PC-9 (cell line): ENCODE measurements at regions of chr10 and their contacts with region 1.

Region 1: GRCh38 chr10:92432596-92432995 is 141.3 kb downstream of the IDE start:
- DNase-seq: no peak
- H3K4me3 ChIP-seq: no peak overlapping the region
- H3K27ac ChIP-seq: no peak overlapping the region
- H3K4me1 ChIP-seq: no peaks in the 10 kb centered on the region
- H3K27me3 ChIP-seq: no peaks in the 10 kb centered on the region
- CTCF ChIP-seq: no peak

Region 2: DNA sequence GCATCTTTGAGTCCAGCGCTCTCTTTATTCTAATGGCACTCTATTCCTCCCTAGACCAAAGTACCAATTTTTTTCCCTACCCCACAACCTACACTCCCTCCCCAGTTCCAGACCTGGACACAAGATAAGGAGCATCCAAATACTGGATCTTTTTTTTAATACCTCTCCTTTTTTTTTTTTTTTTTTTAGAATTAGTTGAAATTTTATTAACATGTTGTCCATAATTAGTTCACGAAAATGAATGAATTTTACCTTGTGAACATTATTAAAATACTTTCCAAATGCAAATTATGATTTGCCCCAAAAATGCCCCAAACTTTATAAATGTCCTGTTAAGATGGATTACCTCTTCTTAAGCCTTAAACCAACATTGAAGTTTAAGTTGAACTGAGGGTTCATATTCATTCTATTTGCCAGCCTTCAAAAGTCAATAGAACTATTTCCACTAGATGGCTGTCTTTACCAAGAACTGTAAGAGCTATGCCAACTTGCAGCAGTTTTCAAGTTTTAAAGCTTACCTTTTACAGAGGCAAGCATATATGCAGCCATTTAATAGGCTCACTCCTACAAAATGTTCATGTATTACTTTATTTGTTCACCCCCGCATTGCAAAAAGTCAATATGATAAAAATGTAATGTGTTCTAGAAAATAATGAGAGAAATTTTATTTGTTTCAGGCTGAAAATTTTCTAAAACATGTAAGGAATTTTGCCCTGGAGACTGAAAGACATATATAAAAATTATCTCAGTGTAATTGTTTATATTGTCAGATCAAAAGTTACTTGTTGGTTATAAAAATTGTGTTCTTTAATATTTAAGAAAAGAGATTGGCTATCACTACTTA is 674.1 kb before region 1 on chr10:
- CTCF ChIA-PET with region 1: no interaction called
- POLR2A ChIA-PET with region 1: no interaction called
- intact Hi-C with region 1: loop called (anchors 2 kb)
- DNase-seq: peak in 1 of 2 experiments; percentile 60
- H3K4me3 ChIP-seq: no peak overlapping the region
- H3K27ac ChIP-seq: no peak overlapping the region
- H3K4me1 ChIP-seq: peaks cover 9% of the 10 kb centered on the region
- H3K27me3 ChIP-seq: no peaks in the 10 kb centered on the region
- CTCF ChIP-seq: peak; percentile 71

Region 3: DNA sequence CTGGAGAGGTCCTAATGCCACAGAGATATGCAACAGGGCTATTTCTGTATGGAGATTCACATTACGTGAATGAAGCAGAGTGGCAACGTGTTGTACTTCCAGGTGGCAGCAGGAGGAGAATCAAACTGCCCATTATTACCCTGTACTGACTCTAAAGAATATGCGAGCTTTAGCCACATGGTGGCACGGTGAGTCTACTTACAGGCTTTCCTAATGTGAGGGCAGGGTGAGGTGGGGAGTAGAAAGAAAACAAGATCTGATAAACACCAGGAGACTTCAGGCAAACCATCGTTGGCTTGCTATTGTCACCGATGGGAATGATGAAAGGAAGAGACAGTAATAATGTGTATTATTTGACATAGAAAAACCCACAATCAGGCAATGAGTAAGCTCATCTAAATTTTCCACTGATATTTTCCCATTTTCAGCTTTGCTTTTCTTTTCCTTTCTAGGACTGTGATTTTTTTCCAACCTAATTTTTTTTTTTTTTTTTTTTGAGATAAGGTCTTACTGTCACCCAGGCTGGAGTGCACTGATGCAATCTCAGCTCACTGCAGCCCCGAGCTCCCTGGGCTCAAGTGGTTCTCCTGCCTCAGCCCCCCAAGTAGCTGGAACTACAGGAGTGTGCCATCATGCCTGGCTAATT is 344.7 kb before region 1 on chr10:
- CTCF ChIA-PET with region 1: interaction called, 7 read pairs
- POLR2A ChIA-PET with region 1: interaction called, 11 read pairs
- intact Hi-C with region 1: loop called (anchors 1 kb)
- DNase-seq: peak; percentile 67 to 75
- H3K4me3 ChIP-seq: no peak overlapping the region
- H3K27ac ChIP-seq: peak overlapping the region; percentile 36; the same call in 1 of the 2 replicates
- H3K4me1 ChIP-seq: peaks cover 5% of the 10 kb centered on the region; the same call in 1 of the 2 replicates
- H3K27me3 ChIP-seq: no peaks in the 10 kb centered on the region
- CTCF ChIP-seq: peak; percentile 82

Region 4: DNA sequence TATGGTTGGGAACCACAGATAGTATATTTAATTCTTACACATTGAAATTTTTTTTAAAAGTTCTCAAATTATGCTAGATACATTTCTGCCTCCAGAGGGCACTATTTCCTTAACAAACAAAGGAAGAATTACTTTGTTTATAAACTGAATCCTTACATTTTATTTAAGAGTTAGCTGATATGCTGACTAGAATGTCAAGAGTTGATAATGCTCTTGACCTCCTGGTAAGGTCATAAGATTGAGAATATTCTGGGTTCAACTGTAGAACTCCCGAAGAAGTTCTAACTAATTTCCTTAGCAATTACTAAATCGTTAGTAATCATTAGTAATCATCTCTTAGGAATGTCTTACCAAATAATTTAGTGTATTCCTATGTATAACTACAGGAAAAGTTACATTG is 532.7 kb after region 1 on chr10:
- CTCF ChIA-PET with region 1: interaction called, 10 read pairs
- POLR2A ChIA-PET with region 1: no interaction called
- intact Hi-C with region 1: no loop called
- DNase-seq: peak in 1 of 2 experiments; percentile 45
- H3K4me3 ChIP-seq: no peak overlapping the region
- H3K27ac ChIP-seq: no peak overlapping the region
- H3K4me1 ChIP-seq: no peaks in the 10 kb centered on the region
- H3K27me3 ChIP-seq: no peaks in the 10 kb centered on the region
- CTCF ChIP-seq: peak; percentile 84

Region 5: DNA sequence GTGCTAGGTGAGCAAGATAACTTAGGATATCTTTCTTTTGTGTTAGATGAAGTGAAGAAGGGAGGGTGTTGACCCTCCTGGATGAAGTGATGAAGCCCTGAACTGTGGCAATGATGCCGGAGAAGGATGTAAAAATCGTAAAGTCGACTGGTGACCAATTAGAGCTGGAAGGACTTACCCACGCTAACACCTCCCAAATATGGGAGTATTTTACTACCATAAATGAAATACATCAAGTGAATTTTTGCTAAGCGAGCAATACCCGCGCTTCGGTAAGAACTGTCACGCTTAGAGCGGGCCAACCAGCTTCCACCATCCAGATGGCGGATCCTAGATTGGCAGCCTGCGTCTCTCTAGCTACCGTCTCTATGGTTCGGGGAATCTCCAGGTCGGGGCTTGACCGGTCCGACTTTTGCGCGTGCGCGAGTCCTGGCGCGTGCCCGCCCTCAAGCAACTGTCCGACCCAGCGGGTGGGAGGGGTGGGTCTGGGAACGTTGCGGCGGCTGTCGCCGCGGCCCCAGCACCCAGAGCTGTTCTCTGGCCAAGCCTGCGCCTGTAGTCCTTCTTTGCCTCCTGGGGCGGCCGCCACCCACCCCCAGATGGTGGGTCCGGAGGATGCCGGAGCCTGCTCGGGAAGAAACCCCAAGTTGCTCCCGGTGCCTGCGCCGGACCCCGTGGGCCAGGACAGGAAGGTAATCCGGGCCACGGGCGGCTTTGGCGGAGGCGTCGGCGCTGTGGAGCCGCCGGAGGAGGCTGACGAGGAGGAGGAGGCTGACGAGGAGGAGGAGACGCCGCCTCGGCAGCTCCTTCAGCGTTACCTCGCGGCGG is 1969.6 kb after region 1 on chr10 and contains the start of gene TBC1D12:
- CTCF ChIA-PET with region 1: no interaction called
- POLR2A ChIA-PET with region 1: interaction called, 11 read pairs
- intact Hi-C with region 1: no loop called
- DNase-seq: peak; percentile 82 to 90
- H3K4me3 ChIP-seq: peak within 1 kb of the TSS; percentile 76
- H3K27ac ChIP-seq: peak within 1 kb of the TSS; percentile 56
- H3K4me1 ChIP-seq: peaks cover 23% of the 10 kb centered on the region; the same call in 1 of the 2 replicates
- H3K27me3 ChIP-seq: no peaks in the 10 kb centered on the region
- CTCF ChIP-seq: no peak
- total RNA-seq, gene TBC1D12: 3.1 and 3.9 TPM in 2 replicates